OCI-LY7 (cell line): ENCODE measurements at regions of chr3 and their contacts with region 1.

Region 1: GRCh38 chr3:182683453-182683852 is 109.9 kb upstream of the ATP11B start:
- DNase-seq: peak; percentile 77
- H3K4me3 ChIP-seq: no peak overlapping the region
- H3K27ac ChIP-seq: peak overlapping the region; percentile 54
- H3K4me1 ChIP-seq: peaks cover 12% of the 10 kb centered on the region
- CTCF ChIP-seq: peak; percentile 99

Region 2: GRCh38 chr3:181103605-181104004 is 1579.8 kb before region 1 on chr3:
- CTCF ChIA-PET with region 1: no interaction called
- POLR2A ChIA-PET with region 1: no interaction called
- intact Hi-C with region 1: loop called (anchors 10 kb)
- DNase-seq: peak; percentile 67
- H3K4me3 ChIP-seq: no peak overlapping the region
- H3K27ac ChIP-seq: no peak overlapping the region
- H3K4me1 ChIP-seq: no peaks in the 10 kb centered on the region
- CTCF ChIP-seq: peak; percentile 78

Region 3: GRCh38 chr3:181326637-181327223 is 1356.7 kb before region 1 on chr3:
- CTCF ChIA-PET with region 1: no interaction called
- POLR2A ChIA-PET with region 1: no interaction called
- intact Hi-C with region 1: loop called (anchors 10 kb)
- DNase-seq: peak; percentile 57
- H3K4me3 ChIP-seq: no peak overlapping the region
- H3K27ac ChIP-seq: no peak overlapping the region
- H3K4me1 ChIP-seq: no peaks in the 10 kb centered on the region
- CTCF ChIP-seq: peak; percentile 94

Region 4: GRCh38 chr3:182258538-182259177 is 424.8 kb before region 1 on chr3:
- CTCF ChIA-PET with region 1: no interaction called
- POLR2A ChIA-PET with region 1: no interaction called
- intact Hi-C with region 1: loop called (anchors 5 kb)
- DNase-seq: peak; percentile 65
- H3K4me3 ChIP-seq: no peak overlapping the region
- H3K27ac ChIP-seq: no peak overlapping the region
- H3K4me1 ChIP-seq: peaks cover 21% of the 10 kb centered on the region
- CTCF ChIP-seq: peak; percentile 93

Region 5: GRCh38 chr3:182729903-182730674 is 46.6 kb after region 1 on chr3:
- CTCF ChIA-PET with region 1: no interaction called
- POLR2A ChIA-PET with region 1: no interaction called
- intact Hi-C with region 1: no loop called
- DNase-seq: peak; percentile 56
- H3K4me3 ChIP-seq: peak overlapping the region; percentile 43
- H3K27ac ChIP-seq: no peak overlapping the region
- H3K4me1 ChIP-seq: peaks cover 13% of the 10 kb centered on the region
- CTCF ChIP-seq: no peak